B cell (primary cell): ENCODE measurements at regions of chr17 and their contacts with region 1.

Region 1: DNA sequence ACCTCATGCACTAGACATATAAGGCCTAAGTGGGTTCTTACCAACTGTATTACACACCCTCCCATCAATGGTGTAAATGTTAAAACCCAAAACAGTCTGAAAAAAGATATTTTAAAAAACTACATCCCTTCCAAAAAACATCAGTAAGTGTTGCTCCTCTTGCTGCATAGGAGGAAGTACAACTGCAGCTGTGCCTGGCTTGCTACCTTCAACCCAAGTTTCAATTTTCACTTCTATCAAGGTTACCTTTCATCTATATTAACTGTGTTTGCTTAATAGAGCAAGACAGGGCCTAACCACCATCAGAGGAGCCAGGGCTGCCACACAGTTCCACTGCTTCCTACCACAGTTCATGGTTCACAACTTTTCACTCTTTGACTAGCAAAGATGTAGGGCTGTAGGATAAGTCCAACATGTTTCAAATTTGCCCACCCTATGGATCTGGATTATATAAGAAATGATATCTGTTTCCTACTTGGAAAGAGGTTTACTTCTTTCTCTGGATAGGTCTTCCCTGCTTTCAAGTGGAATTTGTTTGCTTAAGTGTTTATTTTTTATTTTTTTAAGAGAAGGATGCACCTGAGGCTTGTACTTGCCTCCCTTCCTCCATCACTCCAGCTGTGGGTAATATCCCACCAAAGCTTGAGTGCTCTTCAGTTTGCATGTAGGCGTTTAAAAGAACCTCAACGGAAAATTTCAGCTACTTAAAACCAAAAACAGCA is 56.7 kb downstream of the GRB7 start:
- DNase-seq: peak; percentile 89
- ATAC-seq: peak; percentile 95
- H3K4me3 ChIP-seq: peak overlapping the region in 1 of 5 experiments; percentile 30
- H3K4me3 Mint-ChIP-seq: peak overlapping the region; percentile 69
- H3K27ac ChIP-seq: peak overlapping the region; percentile 70 to 86
- H3K27ac Mint-ChIP-seq: peak overlapping the region; percentile 91
- H3K4me1 ChIP-seq: peaks cover 81 to 86% of the 10 kb centered on the region in 2 donors
- H3K4me1 Mint-ChIP-seq: peaks cover 72% of the 10 kb centered on the region
- H3K27me3 ChIP-seq: no peaks in the 10 kb centered on the region
- H3K27me3 Mint-ChIP-seq: no peaks in the 10 kb centered on the region
- CTCF ChIP-seq: no peak

Region 2: DNA sequence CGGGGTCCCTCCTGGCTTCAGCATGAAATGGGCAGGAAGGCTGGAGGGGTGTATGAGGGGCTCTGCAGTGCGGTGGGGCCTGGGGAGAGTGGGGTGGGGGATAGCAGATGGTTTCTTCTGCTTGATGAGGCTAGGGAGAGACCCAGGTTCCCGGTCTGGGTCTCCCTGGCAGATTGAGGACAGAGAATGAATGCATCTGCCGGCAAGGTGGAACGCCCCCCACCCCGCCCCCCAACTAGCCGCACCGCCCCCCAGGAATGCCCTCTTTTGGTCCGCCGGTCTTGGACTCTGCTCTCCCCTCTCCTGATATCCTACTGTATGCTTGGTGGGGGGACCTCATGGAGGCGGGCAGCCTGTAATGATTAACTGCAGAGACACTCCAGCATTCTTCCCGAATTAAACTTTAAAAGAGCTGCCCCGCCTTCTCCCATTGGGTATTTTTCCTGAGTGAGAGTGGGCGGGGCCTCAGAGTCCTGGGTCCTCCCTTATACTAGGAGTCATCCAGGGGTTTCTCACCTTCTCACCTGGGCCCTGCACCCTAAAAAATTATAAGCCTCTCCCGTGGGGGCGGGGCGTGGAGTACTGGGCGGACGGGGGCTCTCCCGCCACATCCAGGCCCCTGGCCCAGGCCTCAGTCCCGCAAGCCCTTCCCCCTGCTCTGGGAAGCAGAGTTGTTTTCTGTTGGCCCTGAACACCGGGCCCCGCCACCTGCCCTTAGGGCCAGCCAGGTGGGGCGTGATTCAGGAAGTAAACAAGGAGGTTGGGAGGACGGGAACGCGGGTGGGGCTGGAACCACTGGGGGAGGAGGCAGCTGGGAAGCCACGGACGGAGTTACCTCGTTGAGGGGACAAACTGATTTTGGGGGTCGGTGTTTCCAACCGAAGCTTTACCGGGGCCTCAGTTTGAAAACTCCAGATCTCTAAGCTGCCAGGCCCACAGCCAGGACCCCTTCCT is 55.2 kb before region 1 on chr17:
- CTCF ChIA-PET with region 1: no interaction called
- POLR2A ChIA-PET with region 1: no interaction called
- intact Hi-C with region 1: no loop called
- DNase-seq: no peak
- ATAC-seq: peak; percentile 29
- H3K4me3 ChIP-seq: peak overlapping the region in 4 of 5 experiments; percentile 31 to 58 (median 42)
- H3K4me3 Mint-ChIP-seq: peak overlapping the region; percentile 80
- H3K27ac ChIP-seq: no peak overlapping the region
- H3K27ac Mint-ChIP-seq: no peak overlapping the region
- H3K4me1 ChIP-seq: peaks cover 32 to 35% of the 10 kb centered on the region in 2 donors
- H3K4me1 Mint-ChIP-seq: peaks cover 33% of the 10 kb centered on the region
- H3K27me3 ChIP-seq: peaks cover 0 to 34% (median 12%) of the 10 kb centered on the region in 4 experiments
- H3K27me3 Mint-ChIP-seq: peaks cover 30% of the 10 kb centered on the region
- CTCF ChIP-seq: no peak

Region 3: DNA sequence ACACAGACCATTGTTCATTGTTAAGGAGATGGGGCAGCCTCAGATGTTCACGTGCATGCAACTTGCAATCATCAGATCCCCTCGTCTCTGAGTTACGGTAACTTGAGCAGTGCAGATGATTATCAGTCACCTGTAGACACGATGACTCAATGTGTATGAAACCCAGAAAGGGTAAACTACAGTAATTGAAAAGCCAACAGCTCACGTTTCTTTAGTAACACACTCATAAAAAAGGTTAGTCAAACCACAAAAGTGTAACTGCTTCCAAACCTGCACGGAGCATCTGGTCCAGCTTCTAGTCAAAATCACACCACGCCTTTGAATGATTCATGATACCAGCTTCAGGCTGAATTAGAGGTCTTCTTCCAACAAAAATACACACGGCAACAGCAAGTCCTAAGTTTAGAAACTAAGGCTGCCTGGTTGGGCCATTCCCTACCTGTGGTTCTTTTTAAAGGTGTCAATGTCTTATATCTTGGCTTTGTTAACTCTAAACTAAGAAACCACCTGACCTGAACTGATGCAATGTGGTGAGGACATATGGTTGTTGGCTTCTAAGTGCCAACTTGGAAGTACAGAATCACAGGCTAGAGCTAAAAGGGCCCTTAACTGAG is 24.3 kb before region 1 on chr17:
- CTCF ChIA-PET with region 1: interaction called, 6 read pairs
- POLR2A ChIA-PET with region 1: interaction called, 12 read pairs
- intact Hi-C with region 1: no loop called
- DNase-seq: no peak
- ATAC-seq: peak; percentile 67
- H3K4me3 ChIP-seq: no peak overlapping the region
- H3K4me3 Mint-ChIP-seq: peak overlapping the region; percentile 79
- H3K27ac ChIP-seq: peak overlapping the region; percentile 14 to 86
- H3K27ac Mint-ChIP-seq: peak overlapping the region; percentile 98
- H3K4me1 ChIP-seq: peaks cover 84 to 90% of the 10 kb centered on the region in 2 donors
- H3K4me1 Mint-ChIP-seq: peaks cover 95% of the 10 kb centered on the region
- H3K27me3 ChIP-seq: no peaks in the 10 kb centered on the region
- H3K27me3 Mint-ChIP-seq: no peaks in the 10 kb centered on the region
- CTCF ChIP-seq: no peak

Region 4: GRCh38 chr17:39777534-39778365 is 16.7 kb before region 1 on chr17:
- CTCF ChIA-PET with region 1: interaction called, 31 read pairs
- POLR2A ChIA-PET with region 1: interaction called, 8 read pairs
- intact Hi-C with region 1: loop called (anchors 1 kb)
- DNase-seq: peak; percentile 59
- ATAC-seq: peak; percentile 36
- H3K4me3 ChIP-seq: peak overlapping the region; percentile 17 to 86 (median 51)
- H3K4me3 Mint-ChIP-seq: peak overlapping the region; percentile 89
- H3K27ac ChIP-seq: peak overlapping the region; percentile 33 to 86
- H3K27ac Mint-ChIP-seq: peak overlapping the region; percentile 93
- H3K4me1 ChIP-seq: peaks cover 80 to 90% of the 10 kb centered on the region in 2 donors
- H3K4me1 Mint-ChIP-seq: peaks cover 81% of the 10 kb centered on the region
- H3K27me3 ChIP-seq: no peaks in the 10 kb centered on the region
- H3K27me3 Mint-ChIP-seq: no peaks in the 10 kb centered on the region
- CTCF ChIP-seq: no peak

Region 5: DNA sequence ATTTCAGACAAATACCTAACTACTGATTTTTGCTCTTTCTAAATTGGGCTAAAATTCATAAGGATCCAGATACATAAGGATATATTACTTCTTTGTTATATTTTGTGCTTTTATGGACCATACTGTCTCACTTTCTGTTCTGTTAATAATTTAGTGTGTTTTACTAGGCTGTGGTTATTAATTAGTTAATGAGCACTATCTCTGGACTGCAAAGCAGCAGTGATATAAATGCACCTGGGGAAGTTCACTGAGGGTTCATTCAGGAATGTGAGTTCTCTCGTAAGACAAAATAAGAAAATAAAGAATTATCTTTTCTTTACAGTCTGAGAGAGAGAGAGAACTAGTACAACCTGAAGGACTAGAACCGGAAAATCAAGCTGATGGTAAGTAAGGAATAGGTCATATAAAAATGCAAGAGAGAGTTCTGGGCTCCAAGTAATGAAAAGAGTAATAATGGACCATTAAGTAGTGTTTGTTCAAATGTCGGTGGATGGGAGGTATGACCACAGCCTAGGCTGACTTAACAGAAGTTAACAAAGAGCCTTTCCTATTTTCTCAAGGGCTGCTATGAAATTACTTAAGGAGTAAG is 14.1 kb after region 1 on chr17:
- CTCF ChIA-PET with region 1: interaction called, 6 read pairs
- POLR2A ChIA-PET with region 1: interaction called, 6 read pairs
- intact Hi-C with region 1: loop called (anchors 2 kb)
- DNase-seq: no peak
- ATAC-seq: no peak
- H3K4me3 ChIP-seq: no peak overlapping the region
- H3K4me3 Mint-ChIP-seq: no peak overlapping the region
- H3K27ac ChIP-seq: peak overlapping the region in 1 of 2 donors; percentile 79
- H3K27ac Mint-ChIP-seq: peak overlapping the region; percentile 81
- H3K4me1 ChIP-seq: peaks cover 26 to 32% of the 10 kb centered on the region in 2 donors
- H3K4me1 Mint-ChIP-seq: peaks cover 69% of the 10 kb centered on the region
- H3K27me3 ChIP-seq: no peaks in the 10 kb centered on the region
- H3K27me3 Mint-ChIP-seq: no peaks in the 10 kb centered on the region
- CTCF ChIP-seq: no peak

Region 6: DNA sequence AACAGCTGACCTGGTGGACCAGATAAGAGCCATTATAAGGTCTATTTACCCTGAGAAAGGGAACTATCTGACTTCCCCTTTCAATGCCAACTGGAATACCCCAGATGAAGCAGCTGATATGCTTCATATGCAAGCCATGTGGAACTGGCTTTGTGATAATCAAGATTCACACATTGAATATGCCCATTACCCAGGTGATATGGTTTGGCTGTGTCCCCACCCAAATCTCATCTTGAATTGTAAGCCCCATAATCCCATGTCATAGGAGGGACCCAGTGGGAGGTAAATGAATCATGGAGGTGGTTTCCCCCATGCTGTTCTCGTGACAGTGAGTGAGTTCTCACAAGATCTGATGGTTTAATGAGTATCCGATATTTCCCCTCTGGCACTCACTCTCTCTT is 27.6 kb after region 1 on chr17:
- CTCF ChIA-PET with region 1: interaction called, 5 read pairs
- POLR2A ChIA-PET with region 1: interaction called, 5 read pairs
- intact Hi-C with region 1: loop called (anchors 2 kb)
- DNase-seq: peak; percentile 81
- ATAC-seq: peak; percentile 70
- H3K4me3 ChIP-seq: no peak overlapping the region
- H3K4me3 Mint-ChIP-seq: peak overlapping the region; percentile 70
- H3K27ac ChIP-seq: peak overlapping the region; percentile 58 to 85
- H3K27ac Mint-ChIP-seq: peak overlapping the region; percentile 86
- H3K4me1 ChIP-seq: peaks cover 53 to 54% of the 10 kb centered on the region in 2 donors
- H3K4me1 Mint-ChIP-seq: peaks cover 53% of the 10 kb centered on the region
- H3K27me3 ChIP-seq: no peaks in the 10 kb centered on the region
- H3K27me3 Mint-ChIP-seq: no peaks in the 10 kb centered on the region
- CTCF ChIP-seq: no peak

Region 7: DNA sequence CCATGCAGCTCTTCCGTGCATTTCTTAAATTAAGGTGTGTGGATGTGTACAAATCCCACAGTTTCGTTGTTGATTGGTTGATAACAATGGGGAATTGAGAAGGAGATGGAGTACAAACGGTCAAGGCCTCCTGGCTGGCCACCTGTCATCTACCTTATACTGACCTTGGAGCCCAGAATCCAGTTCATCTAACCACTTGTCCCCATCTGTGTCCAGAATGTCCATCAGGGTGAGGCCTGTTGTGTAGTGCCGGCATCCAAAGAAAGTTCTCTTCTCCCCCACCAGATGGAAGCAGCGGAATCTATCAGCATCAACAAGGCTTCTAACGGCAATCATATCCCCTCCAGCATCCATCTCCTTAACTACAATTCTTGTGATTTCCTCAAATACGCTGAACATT is 122.5 kb after region 1 on chr17:
- CTCF ChIA-PET with region 1: no interaction called
- POLR2A ChIA-PET with region 1: no interaction called
- intact Hi-C with region 1: no loop called
- DNase-seq: no peak
- ATAC-seq: no peak
- H3K4me3 ChIP-seq: no peak overlapping the region
- H3K4me3 Mint-ChIP-seq: no peak overlapping the region
- H3K27ac ChIP-seq: no peak overlapping the region
- H3K27ac Mint-ChIP-seq: no peak overlapping the region
- H3K4me1 ChIP-seq: peaks cover 13 to 23% of the 10 kb centered on the region in 2 donors
- H3K4me1 Mint-ChIP-seq: peaks cover 31% of the 10 kb centered on the region
- H3K27me3 ChIP-seq: no peaks in the 10 kb centered on the region
- H3K27me3 Mint-ChIP-seq: no peaks in the 10 kb centered on the region
- CTCF ChIP-seq: no peak

Region 8: DNA sequence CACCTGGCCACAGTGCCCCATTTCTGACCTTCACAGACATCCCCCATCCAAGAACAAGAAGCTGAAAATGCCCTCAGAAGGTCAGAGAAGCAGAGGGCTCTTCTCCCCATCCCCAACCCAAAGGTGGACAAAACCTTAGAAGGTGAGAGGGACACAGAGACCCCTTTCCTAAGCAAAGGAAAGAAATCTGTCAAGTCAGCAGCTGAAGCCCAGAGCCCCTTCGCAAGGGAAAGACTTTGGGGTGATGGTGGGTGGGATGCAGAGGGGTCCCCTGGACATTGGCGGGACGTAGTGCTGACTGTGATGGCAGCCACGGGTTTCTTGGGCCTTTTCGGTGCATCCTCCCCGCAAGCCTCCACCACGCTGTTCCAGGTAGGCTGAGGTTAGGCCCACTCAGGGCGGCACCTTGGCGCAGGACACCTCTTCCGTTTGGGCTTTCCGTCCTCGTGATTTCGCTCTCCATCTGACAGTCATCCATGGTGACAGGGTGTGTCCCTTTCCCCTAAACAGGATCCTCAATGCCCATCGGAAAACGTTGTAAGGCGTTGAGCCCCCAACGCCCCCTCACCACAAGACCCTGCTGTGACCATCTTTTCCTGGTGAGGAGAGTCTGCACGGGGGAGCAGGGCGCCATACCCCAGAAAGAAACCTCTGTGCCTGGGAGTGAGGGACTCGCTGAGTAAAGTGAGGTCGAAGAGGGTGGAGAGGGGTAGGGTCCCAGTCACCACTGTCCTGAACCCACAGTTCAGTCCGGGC is 157.7 kb after region 1 on chr17:
- CTCF ChIA-PET with region 1: no interaction called
- POLR2A ChIA-PET with region 1: no interaction called
- intact Hi-C with region 1: no loop called
- DNase-seq: no peak
- ATAC-seq: no peak
- H3K4me3 ChIP-seq: peak overlapping the region in 4 of 5 experiments; percentile 46 to 65 (median 58)
- H3K4me3 Mint-ChIP-seq: peak overlapping the region; percentile 80
- H3K27ac ChIP-seq: peak overlapping the region; percentile 38 to 44
- H3K27ac Mint-ChIP-seq: peak overlapping the region; percentile 50
- H3K4me1 ChIP-seq: peaks cover 26 to 40% of the 10 kb centered on the region in 2 donors
- H3K4me1 Mint-ChIP-seq: peaks cover 36% of the 10 kb centered on the region
- H3K27me3 ChIP-seq: no peaks in the 10 kb centered on the region
- H3K27me3 Mint-ChIP-seq: no peaks in the 10 kb centered on the region
- CTCF ChIP-seq: no peak

Region 9: DNA sequence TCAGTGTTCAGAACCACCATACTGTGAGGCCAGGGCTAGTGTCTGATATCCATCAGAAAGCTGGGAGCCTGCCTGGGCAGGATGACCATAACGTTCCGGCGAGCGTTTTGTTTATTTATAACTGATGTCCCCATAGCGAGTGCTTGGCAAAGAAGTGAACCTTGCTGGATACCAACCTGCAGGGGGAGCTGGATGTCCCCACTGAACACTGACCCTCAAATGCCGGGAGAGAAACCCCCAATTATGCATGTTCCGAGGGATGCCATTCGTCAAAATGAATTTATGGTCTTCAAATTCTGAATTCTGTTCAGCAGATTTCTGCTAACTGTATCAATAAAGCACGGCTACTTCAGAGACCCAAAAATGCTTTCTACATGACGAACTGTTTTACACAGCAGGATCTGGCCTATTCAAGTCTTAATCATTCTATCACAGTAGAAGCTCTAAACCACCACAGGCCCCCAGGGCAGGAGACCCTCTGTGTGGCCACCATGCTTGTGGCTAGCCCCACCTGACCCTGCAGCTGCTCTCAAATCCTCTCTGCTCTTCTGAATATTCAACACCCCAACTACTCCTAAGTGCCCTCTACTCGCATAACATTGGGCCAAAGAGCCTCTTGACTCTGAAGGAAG is 244.6 kb after region 1 on chr17:
- CTCF ChIA-PET with region 1: no interaction called
- POLR2A ChIA-PET with region 1: no interaction called
- intact Hi-C with region 1: no loop called
- DNase-seq: no peak
- ATAC-seq: no peak
- H3K4me3 ChIP-seq: no peak overlapping the region
- H3K4me3 Mint-ChIP-seq: no peak overlapping the region
- H3K27ac ChIP-seq: no peak overlapping the region
- H3K27ac Mint-ChIP-seq: no peak overlapping the region
- H3K4me1 ChIP-seq: no peaks in the 10 kb centered on the region
- H3K4me1 Mint-ChIP-seq: no peaks in the 10 kb centered on the region
- H3K27me3 ChIP-seq: no peaks in the 10 kb centered on the region
- H3K27me3 Mint-ChIP-seq: no peaks in the 10 kb centered on the region
- CTCF ChIP-seq: peak; percentile 28